Activated T-helper 1 cell treated with anti-CD3 and anti-CD28 coated beads, Interleukin-12 subunit alpha, Interleukin-12 subunit beta, Interleukin-2, Interleukin-4 antibody, amounts not matched to agents 30 ng/mL and 10 ng/mL and 1 ng/mL, durations not matched to agents 14 hours and 24 hours and 36 hours (primary cell): ENCODE measurements at regions of chr2 and their contacts with region 1.

Region 1: DNA sequence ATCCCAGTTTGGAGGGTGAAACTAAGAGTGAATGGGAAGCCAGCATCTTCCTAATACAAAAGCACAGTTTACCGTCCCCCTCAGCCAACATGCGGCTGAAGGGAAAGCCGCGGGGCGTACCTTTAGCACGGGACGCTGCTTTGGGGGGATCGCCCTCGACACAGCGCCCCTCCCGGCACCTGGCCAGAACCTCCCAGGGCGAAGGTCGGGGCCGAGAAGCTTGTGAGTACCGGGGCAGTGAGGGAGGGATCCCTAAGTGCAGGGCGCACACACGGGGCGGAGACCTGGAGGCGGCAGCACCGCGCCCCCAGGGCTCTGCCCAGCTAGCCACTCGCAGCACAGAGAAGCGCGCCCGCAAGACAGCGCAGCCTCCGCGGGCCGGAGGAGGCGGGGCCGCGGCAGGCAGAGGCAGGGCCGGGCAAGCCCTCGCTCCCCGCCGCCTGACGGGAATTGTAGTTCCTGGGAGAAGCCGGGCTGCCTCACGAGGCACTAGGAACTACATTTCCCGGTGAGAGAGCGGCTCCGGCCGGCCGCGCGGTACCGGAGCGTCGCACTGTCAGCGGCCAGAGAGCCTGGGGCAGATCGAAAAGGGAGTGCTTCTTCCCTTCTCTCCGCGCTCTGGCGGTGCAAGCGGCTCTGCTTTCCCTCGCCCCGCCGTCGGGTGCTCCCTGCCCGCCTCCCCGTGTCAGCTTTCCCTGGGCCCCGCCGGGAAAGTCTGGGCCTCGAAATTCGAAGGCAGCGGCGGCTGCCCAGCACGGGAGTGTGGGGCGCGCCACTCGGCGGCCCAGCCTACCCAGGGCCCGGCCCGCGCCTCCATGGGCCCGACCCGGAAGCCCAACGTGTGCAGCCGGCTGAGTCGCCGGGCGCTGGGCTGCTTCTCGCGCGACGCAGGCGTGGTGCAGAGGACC is at the starts of genes DCAF17 and METTL8:
- DNase-seq: peak; percentile 93
- H3K4me3 Mint-ChIP-seq: peak within 1 kb of the TSS; percentile 95
- H3K27ac Mint-ChIP-seq: peak within 1 kb of the TSS; percentile 98
- H3K4me1 Mint-ChIP-seq: peaks cover 28% of the 10 kb centered on the region
- H3K27me3 Mint-ChIP-seq: no peaks in the 10 kb centered on the region
- total RNA-seq, gene DCAF17: 23.9 and 24.9 TPM in 2 replicates
- total RNA-seq, gene METTL8: 31.8 and 36.4 TPM in 2 replicates

Region 2: GRCh38 chr2:170409164-170409535 is 1024.9 kb before region 1 on chr2:
- intact Hi-C with region 1: no loop called
- DNase-seq: peak; percentile 52
- H3K4me3 Mint-ChIP-seq: peak overlapping the region; percentile 45
- H3K27ac Mint-ChIP-seq: no peak overlapping the region
- H3K4me1 Mint-ChIP-seq: peaks cover 8% of the 10 kb centered on the region
- H3K27me3 Mint-ChIP-seq: peaks cover 10% of the 10 kb centered on the region

Region 3: DNA sequence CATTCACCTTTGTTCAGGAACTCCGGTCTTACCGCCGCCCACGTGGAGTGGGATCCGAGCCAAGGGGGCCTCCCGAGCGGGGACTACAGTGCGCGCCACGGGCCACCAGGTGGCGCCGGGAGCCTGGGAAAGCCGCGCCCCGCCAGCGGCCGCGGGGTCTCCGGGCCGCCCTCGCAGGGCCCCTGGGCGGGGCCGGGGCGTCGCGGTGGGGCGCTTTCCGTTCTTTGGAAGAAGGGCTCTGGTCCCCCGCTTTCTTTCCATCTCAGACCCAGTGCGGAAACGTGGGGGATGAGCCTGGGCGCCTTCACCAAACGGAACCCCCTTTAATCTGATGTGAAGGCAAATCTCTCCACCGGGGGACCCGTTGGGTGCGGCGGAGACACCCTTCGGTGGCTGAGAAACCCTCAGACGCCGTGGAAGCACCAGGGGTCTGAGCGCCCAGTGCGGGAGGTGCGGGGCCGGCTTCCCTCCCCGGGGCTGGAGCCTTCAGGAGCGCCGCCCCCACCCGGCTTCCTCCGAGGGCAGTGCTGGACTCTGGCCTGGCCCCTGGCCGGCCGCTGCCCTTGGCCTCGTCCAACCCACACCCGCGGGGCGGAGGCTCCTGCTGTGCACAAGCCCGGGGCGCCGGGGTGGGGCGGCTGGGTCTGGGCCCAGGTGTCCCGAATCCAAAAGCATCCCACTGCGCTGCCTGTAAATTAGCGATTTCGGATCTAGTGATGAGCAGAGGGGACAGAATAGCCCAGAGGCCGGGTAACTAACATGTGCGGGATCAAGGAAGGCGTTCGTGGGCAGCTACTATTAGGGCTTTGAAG is 460.3 kb before region 1 on chr2:
- intact Hi-C with region 1: loop called (anchors 1 kb)
- DNase-seq: peak; percentile 77
- H3K4me3 Mint-ChIP-seq: peak overlapping the region; percentile 73
- H3K27ac Mint-ChIP-seq: no peak overlapping the region
- H3K4me1 Mint-ChIP-seq: peaks cover 16% of the 10 kb centered on the region
- H3K27me3 Mint-ChIP-seq: no peaks in the 10 kb centered on the region

Region 4: DNA sequence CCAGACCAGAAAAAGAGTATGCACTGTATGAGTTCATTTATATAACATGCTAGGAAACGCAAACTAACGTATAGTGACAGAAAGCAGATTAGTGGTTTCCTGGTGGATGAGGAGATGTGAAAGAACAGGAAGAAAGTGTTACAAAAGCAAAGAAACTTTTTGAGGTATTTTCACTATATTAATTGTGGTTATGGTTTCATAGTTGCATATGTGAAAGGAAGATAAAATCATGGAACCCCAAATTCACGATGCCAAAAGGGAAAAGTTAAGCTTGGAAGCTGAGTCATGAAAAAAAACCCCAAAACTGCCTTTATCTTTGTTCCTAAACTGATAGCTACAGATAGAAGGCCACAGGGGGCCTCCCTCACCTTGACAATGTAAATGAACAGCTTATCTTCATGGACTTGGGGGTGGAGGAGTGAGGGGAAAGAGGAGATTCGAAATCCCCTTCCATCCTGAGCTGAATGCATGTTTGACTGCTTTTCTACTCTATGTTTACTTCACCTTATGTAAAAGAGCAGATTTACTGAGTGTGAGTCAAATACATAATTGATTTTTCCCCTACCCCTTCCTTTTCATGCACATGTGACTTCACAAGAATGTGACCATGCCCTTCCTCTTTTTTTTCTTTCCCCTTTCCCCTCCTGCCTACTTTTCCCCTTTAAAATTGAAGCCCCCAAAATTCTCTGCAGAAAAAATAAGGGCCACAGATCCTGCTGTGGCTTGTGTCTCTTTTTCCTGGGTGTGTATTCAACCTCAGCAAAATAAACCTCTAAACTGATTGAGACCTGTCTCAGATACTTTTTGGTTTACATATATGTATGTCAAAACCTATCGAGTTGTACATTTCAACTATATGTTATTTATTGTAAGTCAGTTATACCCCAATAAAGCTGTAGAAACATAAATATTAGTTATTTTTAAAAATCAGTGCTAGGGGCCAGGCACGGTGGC is 173.3 kb before region 1 on chr2:
- intact Hi-C with region 1: loop called (anchors 1 kb)
- DNase-seq: no peak
- H3K4me3 Mint-ChIP-seq: no peak overlapping the region
- H3K27ac Mint-ChIP-seq: peak overlapping the region; percentile 83
- H3K4me1 Mint-ChIP-seq: peaks cover 31% of the 10 kb centered on the region
- H3K27me3 Mint-ChIP-seq: no peaks in the 10 kb centered on the region

Region 5: GRCh38 chr2:171416009-171416926 is 17.7 kb before region 1 on chr2:
- intact Hi-C with region 1: loop called (anchors 1 kb)
- DNase-seq: peak; percentile 65
- H3K4me3 Mint-ChIP-seq: no peak overlapping the region
- H3K27ac Mint-ChIP-seq: peak overlapping the region; percentile 78
- H3K4me1 Mint-ChIP-seq: peaks cover 33% of the 10 kb centered on the region
- H3K27me3 Mint-ChIP-seq: no peaks in the 10 kb centered on the region

Region 6: DNA sequence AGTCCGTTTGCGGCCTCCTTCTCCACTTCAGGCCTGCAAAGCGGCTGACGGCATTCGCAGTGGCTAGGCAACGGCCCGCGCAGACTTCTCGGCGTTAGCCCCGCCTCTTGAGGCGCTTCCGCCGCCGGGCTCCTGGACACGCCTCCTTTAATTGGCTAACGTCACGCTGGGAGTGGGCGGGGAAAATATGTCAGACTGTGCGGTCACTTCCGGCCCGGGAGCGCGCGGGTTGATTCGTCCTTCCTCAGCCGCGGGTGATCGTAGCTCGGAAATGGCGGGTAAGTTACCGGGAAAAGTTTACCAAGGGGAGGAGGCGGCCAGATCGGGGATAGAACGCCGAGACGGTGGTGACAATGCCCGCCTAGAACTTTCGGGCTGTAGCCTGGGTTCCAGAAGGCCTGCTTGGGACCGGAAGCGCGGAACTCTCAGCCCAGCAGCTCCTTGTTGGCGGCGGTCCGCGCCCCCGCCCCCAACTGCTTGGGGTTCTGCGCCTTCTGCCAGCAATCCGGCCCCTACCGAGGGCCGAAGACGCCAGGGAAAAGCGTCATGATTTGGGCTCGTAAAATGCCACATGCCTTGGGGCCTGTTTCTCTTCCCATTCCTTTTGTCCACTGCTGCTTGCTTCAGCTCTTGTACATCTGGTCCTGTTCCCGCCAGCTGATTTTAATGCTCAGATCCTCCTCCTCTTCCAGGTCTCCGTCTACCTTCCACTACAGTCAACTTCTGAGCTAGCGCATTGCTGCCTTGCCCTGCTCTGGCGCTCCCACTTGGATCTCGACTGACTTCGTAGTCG is 488.4 kb after region 1 on chr2 and contains the start of gene HAT1:
- intact Hi-C with region 1: loop called (anchors 1 kb)
- DNase-seq: peak; percentile 97
- H3K4me3 Mint-ChIP-seq: peak within 1 kb of the TSS; percentile 98
- H3K27ac Mint-ChIP-seq: peak within 1 kb of the TSS; percentile 98
- H3K4me1 Mint-ChIP-seq: peaks cover 36% of the 10 kb centered on the region
- H3K27me3 Mint-ChIP-seq: peaks cover 2% of the 10 kb centered on the region
- total RNA-seq, gene HAT1: 68.2 and 73.1 TPM in 2 replicates